ENCODE measurements at regions of chr2 and their contacts with region 1.

Region 1: GRCh38 chr2:127324635-127325034 is 30.7 kb upstream of the ERCC3 start:
- DNase-seq: no peak
- ATAC-seq: peak; percentile 64

Region 2: DNA sequence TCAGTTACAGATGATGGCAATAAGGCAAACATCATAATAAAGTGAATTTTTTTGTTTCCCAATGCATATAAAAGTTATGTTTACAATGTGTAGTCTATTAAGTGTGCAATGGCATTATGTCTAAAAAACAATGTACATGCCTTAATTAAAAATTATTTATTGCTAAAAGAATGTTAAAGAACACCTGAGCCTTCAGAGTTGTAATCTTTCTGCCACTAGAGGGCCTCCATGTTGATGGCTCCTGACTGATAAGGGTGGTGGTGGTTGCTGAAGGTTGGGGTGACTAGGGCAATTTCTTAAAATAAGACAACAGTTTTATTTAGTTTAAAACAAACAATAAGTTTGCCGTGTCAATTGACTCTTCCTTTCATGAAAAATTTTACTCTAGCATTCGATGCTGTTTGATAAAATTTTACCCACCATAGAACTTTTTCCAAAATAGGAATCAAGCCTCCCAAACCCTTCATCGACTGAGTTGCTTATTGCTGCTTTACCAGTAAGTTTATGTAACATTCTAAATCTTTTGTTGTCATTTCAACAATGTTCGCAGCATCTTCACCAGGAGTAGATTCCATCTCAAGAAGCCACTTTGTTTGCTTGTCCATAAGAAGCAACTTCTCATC is 30.9 kb after region 1 on chr2:
- intact Hi-C with region 1: no loop called
- DNase-seq: no peak
- ATAC-seq: peak; percentile 66

Region 3: DNA sequence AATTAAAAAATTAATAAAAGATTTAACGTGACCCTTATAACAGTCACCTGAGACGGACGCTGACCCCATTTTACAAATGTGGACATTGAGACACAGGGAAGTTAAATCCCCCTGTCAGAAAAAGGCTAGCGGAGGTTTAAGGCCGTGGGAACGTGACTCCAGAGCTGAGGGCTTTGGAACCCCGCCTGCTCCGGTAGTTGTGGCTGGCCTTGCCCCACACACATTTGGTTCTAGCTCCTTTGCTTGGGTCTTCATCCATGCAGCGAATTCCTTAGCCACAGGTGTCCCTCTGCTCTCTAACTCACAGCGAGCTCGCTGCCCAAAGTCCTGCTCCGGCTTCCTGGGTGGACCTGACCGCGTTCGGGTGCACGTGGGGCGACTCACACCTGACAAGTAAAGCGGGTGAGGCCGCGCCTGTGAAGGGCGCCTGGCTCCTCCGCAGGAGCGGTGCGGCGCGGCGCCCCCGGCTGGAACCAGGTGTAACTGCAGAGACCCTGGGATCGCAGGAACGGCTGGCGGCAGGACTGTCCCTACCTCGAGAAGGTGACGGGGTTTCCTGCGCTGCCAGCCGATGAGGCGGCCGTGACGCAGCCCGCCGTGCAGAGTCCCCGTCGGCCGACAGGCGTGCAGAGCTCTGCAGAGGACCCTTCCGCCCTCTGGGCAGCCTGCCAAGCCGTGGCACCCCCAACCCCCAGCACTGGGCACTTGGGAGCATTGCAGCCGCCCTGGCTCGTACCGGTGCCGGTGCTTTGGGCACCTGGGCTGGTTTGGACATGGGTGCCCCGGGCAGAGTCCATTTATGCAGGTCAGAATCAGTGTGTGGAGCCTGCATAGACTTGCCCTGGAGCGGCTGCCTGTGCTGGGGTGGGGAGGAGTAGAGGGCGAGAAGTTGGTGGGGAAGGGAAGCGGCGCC is 91.2 kb after region 1 on chr2:
- intact Hi-C with region 1: no loop called
- DNase-seq: peak; percentile 85 to 88
- ATAC-seq: peak; percentile 95

Region 4: DNA sequence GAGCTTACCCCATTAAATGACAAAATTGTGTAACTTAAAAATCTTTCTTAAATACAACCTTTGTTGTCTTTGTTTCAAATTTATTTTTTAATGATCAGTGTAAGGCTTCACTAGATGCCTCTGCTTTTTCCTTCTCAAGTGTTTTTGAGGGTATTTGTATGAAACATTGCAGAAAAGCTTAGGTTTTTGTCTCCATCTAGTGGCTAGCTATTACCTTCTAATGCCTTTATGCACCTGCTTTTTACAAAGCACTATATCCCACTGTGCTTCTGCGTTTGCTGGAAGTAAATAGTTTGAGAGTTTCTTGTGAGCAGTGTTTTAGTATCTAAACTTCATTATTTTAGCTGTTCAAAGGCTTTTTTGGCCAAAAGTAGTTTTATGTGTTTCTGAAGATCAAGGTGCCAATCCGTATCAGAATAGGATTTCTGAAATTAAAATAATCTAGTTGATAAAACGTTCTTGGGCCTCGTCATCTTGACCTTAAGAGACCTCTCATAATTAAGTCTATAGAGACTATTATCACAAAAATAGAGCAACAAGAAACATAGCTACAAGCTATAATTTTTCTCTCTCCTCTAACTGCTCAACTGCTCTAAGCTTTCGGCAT is 154.7 kb after region 1 on chr2:
- intact Hi-C with region 1: loop called (anchors 10 kb)
- DNase-seq: no peak
- ATAC-seq: peak; percentile 77

Region 5: GRCh38 chr2:127486247-127487058 is 161.8 kb after region 1 on chr2:
- intact Hi-C with region 1: loop called in 1 of 2 experiments (anchors 10 kb)
- DNase-seq: no peak
- ATAC-seq: no peak